ENCODE measurements at regions of chr5 and their contacts with region 1.

Region 1: DNA sequence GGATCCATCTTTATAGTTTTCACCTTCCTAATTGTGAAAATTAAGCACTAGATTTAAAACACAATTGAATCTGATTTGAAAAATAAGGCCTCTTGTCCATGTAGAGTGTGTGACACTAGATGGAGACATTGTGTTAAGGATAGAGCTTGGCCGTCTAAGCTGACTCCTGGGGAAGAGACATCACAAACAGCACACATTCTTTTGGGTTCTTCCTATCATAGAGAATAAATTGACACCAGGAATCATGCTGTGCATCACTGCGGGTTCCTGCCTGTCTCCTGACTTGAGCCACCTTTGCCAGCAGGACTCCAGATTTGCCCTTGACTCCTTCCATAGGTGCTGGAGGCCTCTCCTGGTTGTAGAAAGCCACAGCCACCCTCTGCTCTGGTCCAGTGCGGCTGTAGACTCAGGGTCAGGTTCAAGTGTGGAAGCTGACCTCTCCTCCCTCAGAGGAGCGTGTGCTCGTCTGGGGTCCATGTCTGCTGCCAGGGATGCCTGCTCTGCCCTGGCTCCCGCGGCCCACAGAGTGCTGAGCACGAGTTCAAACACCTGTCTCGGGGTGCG is 11.2 kb downstream of the ROPN1L start:
- DNase-seq: peak; percentile 62 to 77
- H3K4me3 ChIP-seq: no peak overlapping the region
- H3K27ac ChIP-seq: peak overlapping the region; percentile 72
- H3K4me1 ChIP-seq: peaks cover 43% of the 10 kb centered on the region
- H3K27me3 ChIP-seq: no peaks in the 10 kb centered on the region
- CTCF ChIP-seq: peak; percentile 95

Region 2: DNA sequence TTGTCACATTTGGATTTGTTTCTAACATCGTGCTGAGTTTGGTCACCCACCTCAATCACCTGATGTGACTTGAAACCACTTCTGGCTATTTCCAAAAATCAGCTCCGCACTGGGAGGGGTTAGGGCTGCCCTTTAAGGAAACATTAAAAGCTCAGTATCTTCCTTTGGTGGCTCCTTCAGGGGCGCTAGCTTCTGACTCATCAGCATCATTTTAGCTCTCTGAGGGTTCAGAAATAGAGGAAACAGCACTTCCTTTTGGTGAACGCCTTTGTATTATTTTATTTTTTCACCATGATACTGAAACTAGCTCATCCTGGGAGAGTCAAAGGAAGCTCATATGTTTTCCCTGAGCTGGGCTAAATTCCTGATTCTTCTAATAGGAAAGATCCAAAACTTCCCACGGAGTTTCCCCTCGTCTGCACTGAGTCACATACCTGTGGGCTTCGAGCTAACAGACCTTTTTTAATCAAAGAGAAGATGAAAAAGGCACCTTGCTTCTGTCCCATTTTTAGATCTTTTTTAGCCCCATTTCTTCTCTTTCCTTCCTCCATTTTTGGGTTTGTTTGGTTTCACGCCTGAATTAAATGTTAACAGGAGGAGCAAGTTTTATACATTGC is 37.1 kb after region 1 on chr5:
- CTCF ChIA-PET with region 1: no interaction called
- POLR2A ChIA-PET with region 1: no interaction called
- intact Hi-C with region 1: loop called (anchors 1 kb)
- DNase-seq: peak in 1 of 2 experiments; percentile 34
- H3K4me3 ChIP-seq: no peak overlapping the region
- H3K27ac ChIP-seq: no peak overlapping the region
- H3K4me1 ChIP-seq: peaks cover 18% of the 10 kb centered on the region
- H3K27me3 ChIP-seq: no peaks in the 10 kb centered on the region
- CTCF ChIP-seq: no peak

Region 3: GRCh38 chr5:10552183-10553143 is 99.6 kb after region 1 on chr5:
- CTCF ChIA-PET with region 1: interaction called, 11 read pairs
- POLR2A ChIA-PET with region 1: interaction called, 10 read pairs
- intact Hi-C with region 1: loop called (anchors 1 kb)
- DNase-seq: peak; percentile 47 to 51
- H3K4me3 ChIP-seq: no peak overlapping the region
- H3K27ac ChIP-seq: peak overlapping the region; percentile 91
- H3K4me1 ChIP-seq: peaks cover 74% of the 10 kb centered on the region
- H3K27me3 ChIP-seq: no peaks in the 10 kb centered on the region
- CTCF ChIP-seq: no peak

Region 4: GRCh38 chr5:10632110-10632761 is 179.4 kb after region 1 on chr5:
- CTCF ChIA-PET with region 1: interaction called, 69 read pairs
- POLR2A ChIA-PET with region 1: interaction called, 8 read pairs
- intact Hi-C with region 1: loop called (anchors 1 kb)
- DNase-seq: peak in 1 of 2 experiments; percentile 85
- H3K4me3 ChIP-seq: no peak overlapping the region
- H3K27ac ChIP-seq: no peak overlapping the region
- H3K4me1 ChIP-seq: peaks cover 5% of the 10 kb centered on the region; the same call in 1 of the 2 replicates
- H3K27me3 ChIP-seq: no peaks in the 10 kb centered on the region
- CTCF ChIP-seq: no peak

Region 5: GRCh38 chr5:10964806-10965205 is 512.0 kb after region 1 on chr5:
- CTCF ChIA-PET with region 1: no interaction called
- POLR2A ChIA-PET with region 1: no interaction called
- intact Hi-C with region 1: loop called (anchors 10 kb)
- DNase-seq: no peak
- H3K4me3 ChIP-seq: no peak overlapping the region
- H3K27ac ChIP-seq: no peak overlapping the region
- H3K4me1 ChIP-seq: peaks cover 5% of the 10 kb centered on the region; the same call in 1 of the 2 replicates
- H3K27me3 ChIP-seq: no peaks in the 10 kb centered on the region
- CTCF ChIP-seq: no peak

Region 6: DNA sequence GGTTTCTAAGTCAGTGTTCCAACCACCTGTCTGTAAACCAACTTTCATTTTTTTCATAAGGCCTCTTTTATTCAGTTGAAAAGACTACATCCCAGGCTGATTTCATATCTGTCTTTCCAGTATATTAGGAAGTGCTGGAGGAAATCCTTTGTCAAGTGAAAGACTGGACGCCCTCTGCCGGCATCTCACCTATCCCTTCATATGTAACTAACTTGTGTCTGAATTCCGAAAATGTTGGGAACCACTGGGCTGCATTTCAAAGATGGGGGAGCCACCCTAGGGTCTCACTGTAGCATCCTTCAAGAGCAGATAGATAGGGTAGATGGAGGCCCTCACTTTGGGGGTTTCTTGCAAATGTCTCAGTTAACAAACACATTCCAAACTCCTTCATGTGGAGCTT is 881.6 kb after region 1 on chr5:
- CTCF ChIA-PET with region 1: no interaction called
- POLR2A ChIA-PET with region 1: no interaction called
- intact Hi-C with region 1: loop called (anchors 5 kb)
- DNase-seq: peak in 1 of 2 experiments; percentile 24
- H3K4me3 ChIP-seq: no peak overlapping the region
- H3K27ac ChIP-seq: no peak overlapping the region
- H3K4me1 ChIP-seq: no peaks in the 10 kb centered on the region
- H3K27me3 ChIP-seq: peaks cover 16% of the 10 kb centered on the region
- CTCF ChIP-seq: peak; percentile 53; the same call in 1 of the 2 replicates